Heart left ventricle (tissue), 16 donors: ENCODE measurements at regions of chr3 and their contacts with region 1.

Region 1: GRCh38 chr3:47420511-47421484 is 40.0 kb downstream of the PTPN23 start:
- DNase-seq: peak; percentile 82 to 87 (median 83)
- ATAC-seq: peak; percentile 63 to 83 (median 73)
- H3K4me3 ChIP-seq: peak overlapping the region in 3 of 12 donors; percentile 15 to 19 (median 18)
- H3K27ac ChIP-seq: peak overlapping the region in 11 of 12 donors; percentile 60 to 84 (median 73)
- H3K4me1 ChIP-seq: peaks cover 0 to 26% (median 16%) of the 10 kb centered on the region in 12 donors
- H3K27me3 ChIP-seq: no peaks in the 10 kb centered on the region
- CTCF ChIP-seq: peak; percentile 83 to 93 (median 90)
- POLR2A ChIP-seq: peak in 1 of 2 donors; percentile 18

Region 2: GRCh38 chr3:47475570-47476329 is 55.0 kb after region 1 on chr3 and contains the start of gene SCAP:
- intact Hi-C with region 1: loop called (anchors 1 to 5 kb)
- DNase-seq: peak; percentile 93 to 97 (median 95)
- ATAC-seq: peak; percentile 91 to 97 (median 97)
- H3K4me3 ChIP-seq: peak within 1 kb of the TSS; percentile 69 to 100 (median 95)
- H3K27ac ChIP-seq: peak within 1 kb of the TSS; percentile 54 to 93 (median 85)
- H3K4me1 ChIP-seq: peaks cover 0 to 30% (median 16%) of the 10 kb centered on the region in 12 donors
- H3K27me3 ChIP-seq: no peaks in the 10 kb centered on the region
- CTCF ChIP-seq: peak; percentile 89 to 98 (median 96)
- POLR2A ChIP-seq: peak in 1 of 2 donors; percentile 76
- total RNA-seq, gene SCAP: 37.2 to 71.6 (median 41.8) TPM

Region 3: DNA sequence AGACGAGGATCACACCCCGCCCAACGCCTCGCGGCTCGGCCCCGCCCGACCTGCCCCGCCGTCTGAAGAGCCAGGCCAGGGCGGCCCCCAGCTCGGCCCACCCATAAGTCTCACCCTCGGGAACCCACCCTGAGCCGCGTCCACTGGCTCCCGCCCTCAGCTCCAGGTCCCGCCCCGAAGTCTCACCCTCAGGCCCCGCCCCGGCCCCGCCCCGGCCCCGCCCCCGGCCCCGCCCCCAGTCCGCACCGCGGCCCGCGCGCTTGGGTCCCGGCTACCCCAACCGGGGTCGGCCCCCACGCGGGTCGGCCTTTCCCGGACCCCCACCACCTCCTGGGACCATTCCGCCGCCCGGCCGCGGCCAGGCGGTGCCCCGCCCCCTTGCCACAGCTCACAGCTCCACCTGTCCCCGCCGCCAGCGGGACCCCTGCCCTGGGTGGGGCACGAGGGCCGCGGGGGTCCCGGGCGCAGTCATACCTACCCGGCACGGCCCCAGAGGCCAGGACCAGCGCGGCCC is 157.4 kb after region 1 on chr3:
- intact Hi-C with region 1: no loop called
- DNase-seq: peak; percentile 23 to 68 (median 39)
- ATAC-seq: peak in 3 of 4 donors; percentile 41 to 80 (median 60)
- H3K4me3 ChIP-seq: peak overlapping the region; percentile 11 to 82 (median 60)
- H3K27ac ChIP-seq: no peak overlapping the region
- H3K4me1 ChIP-seq: peaks cover 0 to 19% (median 10%) of the 10 kb centered on the region in 12 donors
- H3K27me3 ChIP-seq: peaks cover 0 to 32% (median 0%) of the 10 kb centered on the region in 9 donors
- CTCF ChIP-seq: no peak
- POLR2A ChIP-seq: no peak

Region 4: DNA sequence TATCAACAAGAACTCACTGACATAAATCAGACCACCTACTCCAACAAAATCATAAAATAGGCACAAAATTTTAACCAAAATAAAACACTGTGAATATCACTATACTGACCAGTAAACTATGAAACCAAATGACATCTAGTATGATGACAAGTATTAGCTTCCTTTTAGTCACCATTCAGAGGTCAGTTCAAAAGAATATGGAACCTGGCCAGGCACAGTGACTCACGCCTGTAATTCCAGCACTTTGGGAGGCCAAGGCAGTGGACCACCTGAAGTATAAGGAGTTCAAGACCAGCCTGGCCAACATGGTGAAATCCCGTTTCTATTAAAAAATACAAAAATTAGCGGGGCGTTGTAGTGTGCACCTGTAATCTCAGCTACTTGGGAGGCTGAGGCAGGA is 295.1 kb after region 1 on chr3:
- intact Hi-C with region 1: no loop called
- DNase-seq: peak in 1 of 5 donors; percentile 51
- ATAC-seq: peak in 3 of 4 donors; percentile 34 to 70 (median 53)
- H3K4me3 ChIP-seq: no peak overlapping the region
- H3K27ac ChIP-seq: peak overlapping the region in 6 of 12 donors; percentile 5 to 43 (median 29)
- H3K4me1 ChIP-seq: peaks cover 0 to 28% (median 9%) of the 10 kb centered on the region in 12 donors
- H3K27me3 ChIP-seq: no peaks in the 10 kb centered on the region
- CTCF ChIP-seq: no peak
- POLR2A ChIP-seq: no peak